ENCODE measurements at regions of chr20 and their contacts with region 1.

Region 1: DNA sequence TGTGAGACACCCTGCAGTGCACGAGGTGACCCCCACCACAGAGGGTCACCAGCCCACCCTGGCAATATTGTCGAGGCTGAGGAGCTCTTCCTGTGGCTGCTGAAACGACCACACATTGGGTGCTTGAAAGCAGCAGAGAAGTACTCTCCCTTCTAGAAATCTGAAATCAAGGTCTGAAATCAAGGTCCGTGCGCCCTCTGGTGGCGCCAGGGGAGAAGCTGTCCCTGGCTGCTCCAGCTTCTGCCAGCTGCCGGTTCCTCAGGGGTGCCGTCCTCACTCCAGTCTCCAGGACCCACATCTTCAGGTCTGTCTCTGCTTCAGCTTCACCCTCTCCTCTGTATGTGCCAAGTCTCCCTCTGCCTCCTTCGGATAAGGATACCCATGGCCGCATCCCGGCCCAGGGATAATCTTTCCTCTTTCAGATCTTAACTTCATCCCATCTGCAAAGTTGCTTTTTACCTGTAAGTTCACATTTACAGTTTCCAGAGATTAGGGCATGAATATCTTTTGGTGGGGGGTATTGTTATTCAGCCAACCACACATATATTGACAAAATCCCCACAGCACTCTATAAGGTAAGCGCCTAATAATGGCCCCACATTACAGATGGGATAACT is 108.3 kb upstream of the PHACTR3 start:
- DNase-seq: peak; percentile 50 to 59 (median 53)
- H3K4me3 ChIP-seq: no peak overlapping the region
- H3K4me3 Mint-ChIP-seq: no peak overlapping the region
- H3K27ac ChIP-seq: no peak overlapping the region
- H3K27ac Mint-ChIP-seq: no peak overlapping the region
- H3K4me1 ChIP-seq: no peaks in the 10 kb centered on the region
- H3K4me1 Mint-ChIP-seq: peaks cover 0 to 2% (median 0%) of the 10 kb centered on the region in 4 donors
- H3K27me3 ChIP-seq: peaks cover 6% of the 10 kb centered on the region
- H3K27me3 Mint-ChIP-seq: peaks cover 14 to 17% of the 10 kb centered on the region in 2 donors

Region 2: GRCh38 chr20:58864350-58864749 is 631.7 kb before region 1 on chr20:
- CTCF ChIA-PET with region 1: interaction called, 11 read pairs
- POLR2A ChIA-PET with region 1: no interaction called
- intact Hi-C with region 1: no loop called
- DNase-seq: no peak
- H3K4me3 ChIP-seq: no peak overlapping the region
- H3K4me3 Mint-ChIP-seq: no peak overlapping the region
- H3K27ac ChIP-seq: no peak overlapping the region
- H3K27ac Mint-ChIP-seq: no peak overlapping the region
- H3K4me1 ChIP-seq: no peaks in the 10 kb centered on the region
- H3K4me1 Mint-ChIP-seq: no peaks in the 10 kb centered on the region
- H3K27me3 ChIP-seq: no peaks in the 10 kb centered on the region
- H3K27me3 Mint-ChIP-seq: peaks cover 9 to 15% of the 10 kb centered on the region in 2 donors

Region 3: DNA sequence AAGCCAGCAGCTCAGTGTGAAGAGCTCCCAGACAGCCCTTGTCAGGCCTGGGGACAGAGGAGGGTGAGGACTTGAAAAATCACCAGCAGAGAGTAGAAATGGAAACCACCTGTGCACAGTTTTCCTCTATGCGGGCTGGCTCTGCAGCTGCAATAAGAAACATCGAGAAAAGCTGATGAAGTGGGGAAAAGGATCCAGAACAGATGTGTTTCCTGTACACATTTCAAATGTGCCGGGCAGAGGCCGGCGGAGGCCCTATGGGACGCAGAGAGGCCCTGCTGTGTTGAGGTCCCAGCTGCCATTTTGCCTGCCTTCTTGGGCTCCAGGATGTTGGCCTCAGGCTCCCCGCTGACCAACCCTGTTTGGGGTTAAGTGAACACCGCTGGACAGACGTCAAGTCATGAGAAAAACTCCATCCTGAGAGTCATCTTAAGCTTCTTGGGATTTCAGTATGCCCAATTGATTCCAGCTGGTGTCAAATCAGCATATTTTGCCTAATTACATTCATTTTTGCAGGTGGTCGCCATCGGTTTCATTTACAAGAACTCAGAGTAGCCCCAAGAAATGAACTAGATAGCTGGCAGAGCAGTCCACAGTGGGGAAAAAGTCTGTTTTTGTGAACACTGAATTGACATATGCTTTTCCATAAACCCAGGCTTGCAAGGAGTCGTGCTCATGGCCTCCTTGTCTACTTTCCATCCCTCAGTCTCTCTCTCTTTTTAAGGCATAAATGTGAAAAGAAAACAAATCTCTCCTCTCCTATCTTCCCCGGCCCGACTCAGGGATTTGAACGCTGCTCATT is 42.0 kb before region 1 on chr20:
- CTCF ChIA-PET with region 1: no interaction called
- POLR2A ChIA-PET with region 1: no interaction called
- intact Hi-C with region 1: no loop called
- DNase-seq: no peak
- H3K4me3 ChIP-seq: no peak overlapping the region
- H3K4me3 Mint-ChIP-seq: no peak overlapping the region
- H3K27ac ChIP-seq: no peak overlapping the region
- H3K27ac Mint-ChIP-seq: no peak overlapping the region
- H3K4me1 ChIP-seq: no peaks in the 10 kb centered on the region
- H3K4me1 Mint-ChIP-seq: no peaks in the 10 kb centered on the region
- H3K27me3 ChIP-seq: no peaks in the 10 kb centered on the region
- H3K27me3 Mint-ChIP-seq: peaks cover 1 to 38% of the 10 kb centered on the region in 2 donors

Region 4: DNA sequence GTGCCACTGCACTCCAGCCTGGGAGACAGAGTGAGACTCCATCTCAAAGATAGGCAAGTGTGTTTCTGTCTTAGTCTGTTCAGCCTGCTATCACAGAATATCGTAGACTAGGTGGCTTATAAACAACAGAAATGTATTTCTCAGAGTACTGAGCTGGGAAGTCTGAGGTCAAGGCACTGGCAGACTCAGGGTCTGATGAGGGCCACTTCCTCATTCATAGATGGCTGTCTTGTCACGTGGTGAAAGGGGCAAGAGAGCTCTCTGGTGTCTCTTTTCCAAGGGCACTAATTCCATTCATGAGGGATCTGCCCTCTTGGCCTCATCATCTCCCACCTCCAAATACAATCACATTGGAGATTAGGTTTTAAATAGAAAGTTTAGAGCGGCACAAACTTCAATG is 12.7 kb after region 1 on chr20:
- CTCF ChIA-PET with region 1: interaction called, 18 read pairs
- POLR2A ChIA-PET with region 1: no interaction called
- intact Hi-C with region 1: no loop called
- DNase-seq: no peak
- H3K4me3 ChIP-seq: no peak overlapping the region
- H3K4me3 Mint-ChIP-seq: no peak overlapping the region
- H3K27ac ChIP-seq: no peak overlapping the region
- H3K27ac Mint-ChIP-seq: no peak overlapping the region
- H3K4me1 ChIP-seq: no peaks in the 10 kb centered on the region
- H3K4me1 Mint-ChIP-seq: no peaks in the 10 kb centered on the region
- H3K27me3 ChIP-seq: no peaks in the 10 kb centered on the region
- H3K27me3 Mint-ChIP-seq: peaks cover 5 to 19% of the 10 kb centered on the region in 2 donors